ENCODE measurements at regions of chr6 and their contacts with region 1.

Region 1: DNA sequence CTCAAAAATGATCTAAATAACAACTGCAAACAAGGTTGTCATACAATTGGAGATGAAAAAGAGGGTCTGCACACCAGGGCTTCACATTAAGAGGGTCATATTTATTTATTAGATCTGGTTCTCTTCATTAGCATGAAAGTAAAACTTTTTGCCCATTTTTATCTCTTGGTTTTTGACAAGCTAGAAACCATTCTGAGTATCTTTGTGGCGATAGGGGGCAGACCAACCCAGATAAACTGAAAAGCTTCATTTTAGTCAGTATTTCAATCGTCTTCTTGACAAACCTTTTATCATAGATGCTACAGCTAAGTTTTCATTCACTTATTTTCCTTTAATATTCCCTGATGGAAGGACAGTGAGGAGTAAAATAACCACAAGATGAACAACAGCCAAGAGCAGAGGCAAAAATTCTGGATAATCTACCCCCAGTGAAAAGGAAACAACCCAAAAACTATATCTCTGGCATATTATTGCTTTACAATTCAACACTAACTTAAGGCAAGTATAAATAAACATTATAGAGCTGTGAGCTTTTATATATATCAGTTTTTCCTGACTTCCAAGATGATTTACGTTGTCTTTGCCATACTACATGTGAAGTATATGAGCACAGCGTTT is 45.2 kb downstream of the THEMIS start:
- DNase-seq: peak; percentile 35
- ATAC-seq: 0 out of 2 replicates have a peak, but pooled peaks have one; percentile 60
- H3K4me3 ChIP-seq: no peak overlapping the region
- H3K27ac ChIP-seq: no peak overlapping the region
- H3K4me1 ChIP-seq: no peaks in the 10 kb centered on the region
- H3K27me3 ChIP-seq: no peaks in the 10 kb centered on the region
- CTCF ChIP-seq: peak; percentile 62; the same call in 1 of the 2 replicates

Region 2: GRCh38 chr6:128519132-128519930 is 663.7 kb after region 1 on chr6:
- CTCF ChIA-PET with region 1: interaction called, 5 read pairs
- POLR2A ChIA-PET with region 1: no interaction called
- in situ Hi-C with region 1: no loop called
- intact Hi-C with region 1: loop called (anchors 10 kb)
- DNase-seq: no peak
- ATAC-seq: peak; percentile 59
- H3K4me3 ChIP-seq: peak overlapping the region; percentile 84 to 95
- H3K27ac ChIP-seq: peak overlapping the region; percentile 92
- H3K4me1 ChIP-seq: peaks cover 40% of the 10 kb centered on the region
- H3K27me3 ChIP-seq: no peaks in the 10 kb centered on the region
- CTCF ChIP-seq: peak; percentile 52